ENCODE measurements at regions of chr17 and their contacts with region 1.

Region 1: DNA sequence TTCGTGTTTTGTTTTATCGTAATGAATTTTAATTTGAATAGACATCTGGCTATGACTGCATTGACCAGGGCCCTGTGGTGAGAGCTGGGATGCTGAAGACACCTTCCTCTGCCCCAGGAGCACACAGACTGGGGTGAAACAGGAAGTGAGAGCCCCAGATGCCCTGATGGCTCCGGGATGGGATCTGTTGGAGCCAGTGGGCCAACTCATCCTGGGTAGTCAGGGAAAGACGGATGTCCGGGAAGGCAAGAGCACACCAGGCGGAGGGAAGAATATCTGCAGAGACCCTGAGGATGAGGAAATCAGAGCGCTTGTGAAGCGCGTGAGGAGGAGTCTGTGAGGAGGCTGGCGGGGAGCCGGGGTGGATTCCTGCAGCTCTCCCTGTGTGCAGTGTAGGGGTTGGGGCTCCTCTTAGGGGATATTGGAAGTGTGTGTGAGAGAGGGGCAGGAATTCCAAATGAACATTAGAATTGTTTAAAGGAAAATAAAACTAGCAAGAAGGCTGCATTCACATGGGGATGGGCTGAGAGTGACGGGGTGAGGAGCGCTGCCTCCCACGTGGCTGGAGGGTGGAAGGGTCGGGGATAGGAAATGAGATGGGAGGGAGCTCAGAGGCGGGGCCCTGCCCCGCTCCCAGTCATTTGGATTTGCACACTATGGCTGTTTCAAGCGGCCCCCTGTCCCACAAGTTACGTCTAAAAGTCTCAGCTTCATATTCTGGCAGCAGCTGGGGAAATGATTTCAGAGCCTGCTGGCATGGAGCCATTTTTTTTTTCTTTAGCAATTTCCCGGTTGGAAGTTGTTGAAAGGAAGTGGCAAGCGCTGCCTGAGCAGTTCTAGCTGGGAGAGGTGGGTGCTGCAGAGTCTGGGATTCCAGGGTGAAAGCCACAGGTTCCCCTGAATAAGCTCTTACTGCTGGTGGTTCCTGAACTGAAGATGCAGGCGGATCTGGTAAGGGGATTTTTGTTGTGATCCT is 71.2 kb upstream of the LGALS9 start:
- DNase-seq: peak; percentile 91

Region 2: GRCh38 chr17:27345141-27345904 is 214.5 kb before region 1 on chr17:
- intact Hi-C with region 1: no loop called
- DNase-seq: peak; percentile 37

Region 3: GRCh38 chr17:27494192-27495091 is 65.4 kb before region 1 on chr17:
- intact Hi-C with region 1: loop called in 1 of 2 experiments (anchors 10 kb)
- DNase-seq: peak; percentile 94

Region 4: GRCh38 chr17:27525836-27526603 is 33.8 kb before region 1 on chr17:
- intact Hi-C with region 1: loop called in 1 of 2 experiments (anchors 1 kb)
- DNase-seq: no peak

Region 5: GRCh38 chr17:27670791-27671590 is 111.2 kb after region 1 on chr17:
- intact Hi-C with region 1: no loop called
- DNase-seq: no peak